WTC11 (cell line): ENCODE measurements at regions of chr5 and their contacts with region 1.

Region 1: GRCh38 chr5:151126199-151126645 is 31.4 kb downstream of the ANXA6 start:
- DNase-seq: peak; percentile 77
- ATAC-seq: peak; percentile 80
- H3K4me3 Mint-ChIP-seq: no peak overlapping the region
- H3K27ac Mint-ChIP-seq: no peak overlapping the region
- H3K4me1 Mint-ChIP-seq: peaks cover 1% of the 10 kb centered on the region; the same call in 1 of the 2 replicates
- H3K27me3 Mint-ChIP-seq: no peaks in the 10 kb centered on the region
- CTCF ChIP-seq: peak; percentile 86

Region 2: GRCh38 chr5:151141535-151141934 is 15.3 kb after region 1 on chr5:
- CTCF ChIA-PET with region 1: interaction called, 51 read pairs
- POLR2A ChIA-PET with region 1: no interaction called
- DNase-seq: peak; percentile 60
- ATAC-seq: peak; percentile 85
- H3K4me3 Mint-ChIP-seq: no peak overlapping the region; the same call in 1 of the 2 replicates
- H3K27ac Mint-ChIP-seq: peak overlapping the region; percentile 93
- H3K4me1 Mint-ChIP-seq: peaks cover 18% of the 10 kb centered on the region
- H3K27me3 Mint-ChIP-seq: no peaks in the 10 kb centered on the region
- CTCF ChIP-seq: no peak

Region 3: GRCh38 chr5:151157426-151158286 is 31.4 kb after region 1 on chr5 and contains the start of gene ANXA6:
- CTCF ChIA-PET with region 1: interaction called, 191 read pairs
- POLR2A ChIA-PET with region 1: no interaction called
- DNase-seq: peak; percentile 76
- ATAC-seq: peak; percentile 94
- H3K4me3 Mint-ChIP-seq: peak within 1 kb of the TSS; percentile 74
- H3K27ac Mint-ChIP-seq: peak within 1 kb of the TSS; percentile 46; the same call in 1 of the 2 replicates
- H3K4me1 Mint-ChIP-seq: peaks cover 24% of the 10 kb centered on the region
- H3K27me3 Mint-ChIP-seq: peaks cover 14% of the 10 kb centered on the region
- CTCF ChIP-seq: no peak
- total RNA-seq, gene ANXA6: 92.8 to 95.4 TPM (median 92.9 TPM) in 3 replicates

Region 4: DNA sequence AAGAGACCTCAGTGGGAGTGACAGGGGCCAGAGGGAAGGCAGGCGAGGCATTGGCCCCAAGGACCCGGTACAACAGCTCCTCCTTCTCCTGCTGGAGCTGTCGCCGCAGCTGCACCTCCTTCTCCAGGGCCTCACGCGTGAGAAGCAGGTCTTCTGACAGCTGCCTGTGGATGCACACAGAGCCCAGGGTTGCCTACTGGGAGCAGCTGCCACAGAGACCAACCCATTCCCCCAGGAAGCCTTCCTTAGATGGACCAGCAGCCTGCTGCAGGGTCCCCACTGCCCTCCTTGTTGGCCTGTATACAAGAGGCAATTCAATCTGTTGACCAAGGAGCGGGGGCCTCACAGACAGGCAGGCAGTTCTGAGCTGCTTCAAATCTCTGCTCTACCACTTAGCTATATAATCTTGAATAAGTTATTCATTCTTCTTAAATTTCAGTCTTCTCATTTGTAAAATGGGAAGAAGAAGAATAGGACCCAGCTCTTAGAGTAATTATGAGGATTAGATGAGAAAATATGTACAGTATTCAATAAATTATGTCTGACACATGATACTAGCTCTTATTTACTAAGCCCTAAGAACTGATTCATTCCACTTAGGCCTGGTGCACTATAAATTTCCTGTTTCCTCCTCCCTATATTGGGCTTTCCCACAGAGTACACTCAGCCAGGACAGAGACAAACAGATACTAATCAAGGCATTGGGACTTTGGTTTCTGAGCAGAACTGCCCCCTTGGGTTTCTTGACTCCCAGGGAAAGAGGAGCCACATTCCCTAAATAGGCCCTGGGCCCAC is 57.4 kb after region 1 on chr5:
- CTCF ChIA-PET with region 1: no interaction called
- POLR2A ChIA-PET with region 1: no interaction called
- DNase-seq: no peak
- ATAC-seq: no peak
- H3K4me3 Mint-ChIP-seq: no peak overlapping the region
- H3K27ac Mint-ChIP-seq: no peak overlapping the region
- H3K4me1 Mint-ChIP-seq: peaks cover 16% of the 10 kb centered on the region
- H3K27me3 Mint-ChIP-seq: peaks cover 3% of the 10 kb centered on the region; the same call in 1 of the 2 replicates
- CTCF ChIP-seq: no peak

Region 5: DNA sequence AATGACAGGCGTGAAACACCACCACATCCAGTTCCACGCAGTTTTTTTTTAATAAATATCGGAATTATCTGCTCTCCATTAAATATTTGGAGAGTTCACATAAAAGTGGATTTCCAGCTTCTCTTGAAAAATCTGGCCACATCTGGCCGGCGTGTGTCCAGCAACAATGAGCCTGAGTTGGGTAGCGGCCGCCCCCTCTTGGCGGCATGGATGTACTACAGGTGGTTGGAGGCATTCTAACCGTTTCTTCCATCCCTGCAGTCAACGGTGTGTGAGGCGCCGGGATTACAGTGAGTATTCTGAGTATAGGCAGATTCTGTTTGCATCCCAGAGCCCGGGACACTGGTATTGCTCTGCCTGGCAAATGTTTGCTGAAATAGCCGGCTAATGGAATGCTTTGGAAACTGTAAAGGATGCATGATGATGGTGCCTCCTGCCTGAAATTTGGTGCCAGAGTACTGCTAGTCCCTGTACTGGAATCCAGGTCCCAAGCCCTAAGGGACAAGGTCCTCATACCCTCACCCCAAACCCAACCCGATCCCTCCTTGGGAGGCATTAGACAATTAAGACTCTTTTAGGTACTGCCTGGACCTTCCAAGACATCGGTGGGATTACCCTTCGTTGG is 113.1 kb after region 1 on chr5:
- CTCF ChIA-PET with region 1: interaction called, 68 read pairs
- POLR2A ChIA-PET with region 1: no interaction called
- DNase-seq: peak; percentile 81
- ATAC-seq: peak; percentile 83
- H3K4me3 Mint-ChIP-seq: no peak overlapping the region
- H3K27ac Mint-ChIP-seq: no peak overlapping the region; the same call in 1 of the 2 replicates
- H3K4me1 Mint-ChIP-seq: peaks cover 35% of the 10 kb centered on the region
- H3K27me3 Mint-ChIP-seq: no peaks in the 10 kb centered on the region
- CTCF ChIP-seq: peak; percentile 91

Region 6: GRCh38 chr5:151315998-151316597 is 189.9 kb after region 1 on chr5:
- CTCF ChIA-PET with region 1: interaction called, 11 read pairs
- POLR2A ChIA-PET with region 1: no interaction called
- DNase-seq: peak; percentile 78
- ATAC-seq: peak; percentile 76
- H3K4me3 Mint-ChIP-seq: no peak overlapping the region
- H3K27ac Mint-ChIP-seq: no peak overlapping the region
- H3K4me1 Mint-ChIP-seq: peaks cover 18% of the 10 kb centered on the region
- H3K27me3 Mint-ChIP-seq: no peaks in the 10 kb centered on the region
- CTCF ChIP-seq: peak; percentile 78